ENCODE measurements at regions of chr9 and their contacts with region 1.

Region 1: DNA sequence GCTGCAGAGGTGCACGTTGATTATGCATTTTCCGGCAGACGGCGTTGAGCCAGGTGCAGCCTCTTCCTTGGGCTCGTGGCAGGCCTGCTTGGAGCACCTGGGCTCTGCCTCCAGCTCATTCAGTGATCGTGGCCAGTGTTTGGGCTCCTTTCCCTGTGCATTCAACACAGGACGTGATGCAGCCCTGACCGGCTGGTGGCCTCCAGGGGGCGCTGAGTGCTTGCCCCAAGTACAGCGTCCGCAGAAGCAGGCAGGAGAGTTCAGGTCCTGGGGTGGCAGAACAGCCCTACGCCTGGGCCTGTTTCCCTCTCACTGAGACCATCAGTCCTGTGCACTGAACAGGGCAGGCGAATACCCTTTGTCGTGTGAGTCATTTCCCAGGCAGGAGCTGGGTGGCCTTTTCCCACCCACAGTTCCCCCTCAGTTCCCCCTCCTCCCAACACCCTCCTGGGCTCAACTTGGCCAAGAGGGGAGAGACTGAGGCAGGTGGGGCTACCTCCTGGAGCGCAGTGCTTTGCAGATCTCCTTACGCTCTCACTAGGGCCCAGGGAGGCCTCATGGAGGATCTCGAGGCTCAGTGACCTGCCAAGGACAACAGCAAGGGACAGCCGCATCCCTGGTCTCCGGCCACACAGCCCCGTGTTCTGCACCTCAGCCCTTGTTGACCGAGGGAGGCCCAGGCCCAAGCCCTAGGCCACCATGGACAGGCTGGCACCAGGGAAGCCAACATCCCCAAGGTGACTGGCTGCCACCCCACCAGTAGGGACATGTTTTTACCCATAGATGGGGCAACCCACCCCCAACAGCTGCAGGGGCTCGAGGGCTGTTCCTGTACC is 52.9 kb downstream of the LRSAM1 start:
- DNase-seq: peak; percentile 74 to 76 (median 75)
- H3K4me3 ChIP-seq: no peak overlapping the region
- H3K4me3 Mint-ChIP-seq: no peak overlapping the region
- H3K27ac ChIP-seq: no peak overlapping the region
- H3K27ac Mint-ChIP-seq: peak overlapping the region in 4 of 7 donors; percentile 12 to 84 (median 70)
- H3K4me1 ChIP-seq: no peaks in the 10 kb centered on the region
- H3K4me1 Mint-ChIP-seq: peaks cover 0 to 5% (median 2%) of the 10 kb centered on the region in 4 donors
- H3K27me3 ChIP-seq: no peaks in the 10 kb centered on the region
- H3K27me3 Mint-ChIP-seq: no peaks in the 10 kb centered on the region

Region 2: DNA sequence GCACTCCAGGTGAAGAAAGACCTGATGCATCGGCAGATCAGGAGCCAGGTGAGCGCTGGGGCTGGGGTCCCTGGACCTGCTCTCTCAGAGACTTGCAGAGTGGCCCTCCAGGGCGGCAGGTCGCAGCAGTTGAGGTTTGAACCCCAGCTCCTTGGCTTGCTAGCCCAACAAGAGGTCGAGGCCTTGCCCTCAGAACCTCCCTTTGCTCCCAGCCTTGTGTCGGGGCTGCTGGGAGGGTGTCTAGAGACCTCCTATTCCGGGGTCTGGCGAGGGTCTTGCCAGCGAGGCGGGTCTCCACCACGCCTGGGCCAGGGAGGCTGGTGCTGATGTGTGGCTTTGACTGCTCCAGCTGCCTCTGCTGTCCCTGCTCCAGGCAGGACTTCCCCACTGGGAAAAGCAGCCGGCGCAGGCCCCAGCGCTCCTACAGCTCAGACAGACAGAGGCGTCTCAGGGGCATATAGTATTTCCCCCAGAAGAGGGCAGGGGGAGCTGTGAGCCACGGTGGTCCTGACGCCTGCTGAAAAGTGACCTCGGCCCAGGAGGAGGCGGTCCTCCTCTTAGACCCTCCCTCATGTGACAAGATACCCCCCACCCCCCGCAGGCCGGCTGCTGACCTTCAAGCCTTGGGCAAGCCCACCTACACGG is 14.6 kb before region 1 on chr9:
- CTCF ChIA-PET with region 1: no interaction called
- POLR2A ChIA-PET with region 1: no interaction called
- intact Hi-C with region 1: no loop called
- DNase-seq: no peak
- H3K4me3 ChIP-seq: no peak overlapping the region
- H3K4me3 Mint-ChIP-seq: no peak overlapping the region
- H3K27ac ChIP-seq: no peak overlapping the region
- H3K27ac Mint-ChIP-seq: no peak overlapping the region
- H3K4me1 ChIP-seq: no peaks in the 10 kb centered on the region
- H3K4me1 Mint-ChIP-seq: no peaks in the 10 kb centered on the region
- H3K27me3 ChIP-seq: no peaks in the 10 kb centered on the region
- H3K27me3 Mint-ChIP-seq: no peaks in the 10 kb centered on the region

Region 3: DNA sequence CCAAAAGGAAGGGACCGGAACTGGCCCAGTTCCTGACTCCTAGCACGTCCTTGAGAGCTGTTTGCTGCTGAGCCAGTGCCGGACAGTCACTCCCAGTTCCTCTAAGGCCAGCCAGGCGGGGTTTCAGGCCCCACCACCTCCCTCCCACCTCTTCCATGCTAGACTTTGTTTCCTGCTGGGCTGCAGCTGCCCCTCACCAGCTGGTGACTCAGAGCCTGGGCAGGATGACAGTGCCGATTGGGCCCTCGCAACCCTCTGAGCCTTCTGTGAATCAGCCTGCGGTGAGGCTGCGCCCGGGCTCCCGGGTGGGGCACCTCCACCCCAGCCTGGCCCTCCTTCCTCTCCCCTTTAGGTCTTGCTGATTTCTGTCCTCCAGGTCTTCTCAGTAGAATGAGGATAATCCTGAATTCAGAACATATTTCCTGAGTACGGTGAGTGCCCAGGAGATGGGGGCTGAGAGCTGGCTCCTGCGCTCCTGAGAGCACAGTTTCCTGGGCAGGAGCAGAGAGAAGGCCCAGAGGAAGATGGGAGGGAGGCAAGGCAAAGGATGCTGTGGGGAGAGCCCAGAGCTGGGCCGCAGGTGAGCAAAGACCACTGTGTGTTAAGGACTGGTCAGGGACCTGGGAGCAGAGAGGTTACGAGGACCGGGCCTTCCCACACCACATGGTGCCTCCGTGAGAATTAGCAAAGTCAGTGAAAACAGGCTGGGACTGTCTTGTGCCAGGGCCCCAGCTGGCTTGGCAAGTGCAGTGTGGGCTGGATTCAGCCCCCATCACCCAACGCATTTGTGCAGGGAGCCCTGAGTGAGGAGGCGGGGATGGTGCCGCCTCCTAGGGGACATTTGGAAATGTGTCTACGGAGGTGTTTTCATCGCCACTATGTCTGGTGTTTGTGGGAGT is 75.0 kb after region 1 on chr9:
- CTCF ChIA-PET with region 1: interaction called, 73 read pairs
- POLR2A ChIA-PET with region 1: interaction called, 3 read pairs
- intact Hi-C with region 1: no loop called
- DNase-seq: peak; percentile 35 to 83 (median 51)
- H3K4me3 ChIP-seq: no peak overlapping the region
- H3K4me3 Mint-ChIP-seq: peak overlapping the region; percentile 27 to 71 (median 64)
- H3K27ac ChIP-seq: peak overlapping the region; percentile 10
- H3K27ac Mint-ChIP-seq: peak overlapping the region; percentile 48 to 88 (median 85)
- H3K4me1 ChIP-seq: peaks cover 15% of the 10 kb centered on the region
- H3K4me1 Mint-ChIP-seq: peaks cover 11 to 20% (median 13%) of the 10 kb centered on the region in 4 donors
- H3K27me3 ChIP-seq: no peaks in the 10 kb centered on the region
- H3K27me3 Mint-ChIP-seq: no peaks in the 10 kb centered on the region